GM13976 (cell line): ENCODE measurements at regions of chrX and their contacts with region 1.

Region 1: GRCh38 chrX:114611018-114611619 is 27.2 kb downstream of the HTR2C start:
- DNase-seq: peak; percentile 41
- CTCF ChIP-seq: peak; percentile 82

Region 2: GRCh38 chrX:114710571-114710970 is 99.5 kb after region 1 on chrX:
- in situ Hi-C with region 1: no loop called
- DNase-seq: no peak
- CTCF ChIP-seq: no peak

Region 3: GRCh38 chrX:114959729-114960128 is 348.6 kb after region 1 on chrX:
- in situ Hi-C with region 1: loop called (anchors 25 kb)
- DNase-seq: peak; percentile 17
- CTCF ChIP-seq: peak; percentile 11